Naive thymus-derived CD4-positive, alpha-beta T cell (primary cell): ENCODE measurements at regions of chr14 and their contacts with region 1.

Region 1: GRCh38 chr14:45253068-45253753 is at the start of gene MIS18BP1:
- DNase-seq: peak; percentile 83 to 95 (median 91)
- ATAC-seq: peak; percentile 94
- H3K4me3 ChIP-seq: peak within 1 kb of the TSS; percentile 78
- H3K4me3 Mint-ChIP-seq: peak within 1 kb of the TSS; percentile 89 to 97 (median 95)
- H3K27ac ChIP-seq: peak within 1 kb of the TSS; percentile 75
- H3K27ac Mint-ChIP-seq: peak within 1 kb of the TSS; percentile 92 to 97 (median 95)
- H3K4me1 ChIP-seq: peaks cover 0 to 13% of the 10 kb centered on the region in 2 donors
- H3K4me1 Mint-ChIP-seq: peaks cover 5 to 31% (median 20%) of the 10 kb centered on the region in 7 donors
- H3K27me3 ChIP-seq: no peaks in the 10 kb centered on the region
- H3K27me3 Mint-ChIP-seq: peaks cover 0 to 6% (median 0%) of the 10 kb centered on the region in 5 donors
- total RNA-seq, gene MIS18BP1: 15.6 to 64.9 (median 29.4) TPM

Region 2: DNA sequence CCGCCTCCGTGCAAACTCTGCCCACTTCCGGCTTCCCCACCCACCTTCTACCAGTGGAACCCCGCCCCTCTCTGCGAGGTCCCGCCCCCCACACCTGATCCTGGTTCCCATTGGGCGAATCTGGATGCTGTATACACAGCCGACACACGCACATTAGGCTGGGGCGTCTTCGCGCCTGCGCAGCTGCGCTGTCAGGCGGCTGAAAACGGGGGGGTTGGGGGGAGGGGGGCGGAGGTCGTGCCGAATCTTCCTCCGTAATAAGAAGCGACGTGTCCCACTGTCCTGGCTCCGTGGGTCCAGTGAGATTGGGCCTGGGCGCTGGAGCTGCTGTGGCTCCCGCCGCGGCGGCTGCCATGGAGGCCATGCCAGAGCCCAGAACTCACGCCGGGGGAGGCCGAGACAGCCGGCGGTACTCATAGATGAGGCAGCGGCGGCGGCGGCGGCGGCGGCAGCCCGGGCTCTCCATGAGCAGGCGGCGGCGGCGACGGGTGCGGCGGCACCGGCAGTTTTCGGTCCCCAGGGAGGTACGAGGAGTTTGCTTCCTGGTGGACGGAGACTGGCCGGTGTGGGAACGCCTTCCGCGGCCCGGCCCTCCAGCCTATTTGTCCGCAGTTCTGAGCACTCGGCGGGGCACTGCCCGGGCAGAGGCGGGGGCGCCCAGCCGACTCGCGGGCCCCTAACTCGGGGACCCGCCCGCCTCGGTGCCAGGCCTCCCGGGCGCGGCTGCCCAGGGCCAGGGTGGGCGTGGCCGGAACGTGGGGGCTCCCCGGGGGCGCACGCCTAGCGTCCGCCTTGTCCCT is 356.0 kb before region 1 on chr14:
- CTCF ChIA-PET with region 1: no interaction called
- POLR2A ChIA-PET with region 1: no interaction called
- intact Hi-C with region 1: loop called (anchors 1 kb)
- DNase-seq: peak; percentile 80 to 98 (median 90)
- ATAC-seq: peak; percentile 99
- H3K4me3 ChIP-seq: peak overlapping the region; percentile 68
- H3K4me3 Mint-ChIP-seq: peak overlapping the region; percentile 80 to 97 (median 94)
- H3K27ac ChIP-seq: peak overlapping the region; percentile 86
- H3K27ac Mint-ChIP-seq: peak overlapping the region; percentile 83 to 98 (median 98)
- H3K4me1 ChIP-seq: peaks cover 13 to 17% of the 10 kb centered on the region in 2 donors
- H3K4me1 Mint-ChIP-seq: peaks cover 6 to 40% (median 27%) of the 10 kb centered on the region in 7 donors
- H3K27me3 ChIP-seq: no peaks in the 10 kb centered on the region
- H3K27me3 Mint-ChIP-seq: no peaks in the 10 kb centered on the region

Region 3: DNA sequence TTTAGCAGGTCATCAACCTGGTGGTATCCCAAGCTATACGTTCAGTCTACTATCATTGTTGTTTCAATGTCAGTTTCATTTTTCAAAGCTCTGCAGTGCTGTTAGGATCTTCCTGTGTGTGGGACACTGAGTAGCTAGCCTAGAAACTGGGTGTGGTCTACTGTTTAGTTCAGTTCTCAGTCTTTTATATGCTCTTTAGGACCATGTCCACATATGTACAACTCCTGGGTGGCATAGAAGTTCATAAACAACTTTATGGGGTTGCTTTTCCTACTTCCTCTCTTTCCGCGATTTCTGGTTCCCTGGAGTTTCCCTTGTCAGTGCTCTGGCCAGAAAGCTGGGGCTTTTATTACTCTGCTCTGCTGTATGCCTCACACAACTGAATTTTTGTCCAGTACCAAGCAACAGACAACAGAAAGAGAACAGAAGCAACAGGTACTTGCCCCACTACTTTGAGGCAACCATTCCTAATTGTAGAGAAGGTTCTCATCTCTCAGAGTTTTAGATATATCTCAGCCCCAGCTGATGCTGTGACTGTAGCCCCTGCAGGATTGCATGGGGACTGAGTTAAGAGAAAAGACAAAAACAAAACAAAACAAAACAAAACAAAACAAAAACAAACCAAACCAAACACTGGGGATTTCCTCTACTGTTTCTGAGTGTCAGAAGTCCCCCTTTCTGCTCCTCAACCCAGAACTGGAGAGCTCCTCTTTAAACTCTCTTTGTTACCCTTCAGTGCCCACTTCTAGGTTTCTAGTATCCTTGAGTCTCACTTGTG is 30.5 kb before region 1 on chr14:
- CTCF ChIA-PET with region 1: no interaction called
- POLR2A ChIA-PET with region 1: no interaction called
- intact Hi-C with region 1: loop called in 1 of 2 experiments (anchors 1 kb)
- DNase-seq: no peak
- ATAC-seq: no peak
- H3K4me3 ChIP-seq: no peak overlapping the region
- H3K4me3 Mint-ChIP-seq: peak overlapping the region in 1 of 10 donors; percentile 40
- H3K27ac ChIP-seq: no peak overlapping the region
- H3K27ac Mint-ChIP-seq: peak overlapping the region in 2 of 9 donors; percentile 31 to 86
- H3K4me1 ChIP-seq: no peaks in the 10 kb centered on the region
- H3K4me1 Mint-ChIP-seq: peaks cover 0 to 32% (median 0%) of the 10 kb centered on the region in 7 donors
- H3K27me3 ChIP-seq: no peaks in the 10 kb centered on the region
- H3K27me3 Mint-ChIP-seq: no peaks in the 10 kb centered on the region

Region 4: GRCh38 chr14:45492876-45493275 is 239.7 kb after region 1 on chr14:
- CTCF ChIA-PET with region 1: no interaction called
- POLR2A ChIA-PET with region 1: no interaction called
- intact Hi-C with region 1: no loop called
- DNase-seq: no peak
- ATAC-seq: no peak
- H3K4me3 ChIP-seq: no peak overlapping the region
- H3K4me3 Mint-ChIP-seq: no peak overlapping the region
- H3K27ac ChIP-seq: no peak overlapping the region
- H3K27ac Mint-ChIP-seq: no peak overlapping the region
- H3K4me1 ChIP-seq: no peaks in the 10 kb centered on the region
- H3K4me1 Mint-ChIP-seq: no peaks in the 10 kb centered on the region
- H3K27me3 ChIP-seq: no peaks in the 10 kb centered on the region
- H3K27me3 Mint-ChIP-seq: no peaks in the 10 kb centered on the region